ENCODE measurements at regions of chr12 and their contacts with region 1.

Region 1: DNA sequence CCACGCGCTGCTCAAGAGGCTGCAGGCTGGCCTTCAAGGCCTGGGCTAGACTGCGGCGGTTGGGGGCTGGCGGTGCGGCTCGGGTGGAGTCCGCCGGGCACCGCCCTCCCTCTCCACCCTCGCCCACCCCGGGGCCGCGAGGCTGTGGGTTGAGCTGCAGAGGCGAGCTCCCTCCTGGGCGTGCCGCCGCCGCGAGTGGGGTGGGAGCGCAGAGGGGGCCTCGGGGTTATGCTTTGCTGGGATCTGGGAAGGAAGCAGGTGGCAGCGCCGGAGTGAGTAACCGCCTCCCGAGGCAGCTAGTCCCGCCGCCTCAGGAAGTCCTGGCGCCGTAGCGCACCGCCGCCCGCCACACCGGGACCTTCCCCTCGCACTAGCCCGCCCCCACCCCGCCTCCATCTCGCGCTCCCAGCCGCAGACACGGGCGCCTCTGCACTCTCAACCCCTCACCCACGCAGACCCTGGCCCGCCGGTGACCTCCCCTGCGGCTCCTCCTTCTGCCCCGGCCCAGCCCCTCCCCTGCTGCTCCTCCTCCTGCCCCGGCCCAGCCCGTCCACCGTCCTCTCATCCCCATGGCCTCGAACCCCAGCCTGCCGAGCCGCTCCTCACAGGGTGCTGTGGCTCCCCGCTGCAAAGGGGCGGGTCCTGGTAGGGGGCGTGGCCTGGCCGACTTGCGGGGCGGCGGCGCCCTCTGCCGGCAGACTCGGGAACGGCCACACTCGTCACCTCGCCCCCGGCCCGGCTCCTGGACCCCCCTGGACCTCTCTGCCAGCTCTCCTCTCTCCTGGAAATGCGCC is 16.6 kb downstream of the TAMALIN start:
- DNase-seq: peak; percentile 95

Region 2: GRCh38 chr12:52004042-52004648 is 19.2 kb before region 1 on chr12:
- intact Hi-C with region 1: loop called (anchors 1 kb)
- DNase-seq: no peak

Region 3: GRCh38 chr12:52041695-52042123 is 18.3 kb after region 1 on chr12:
- intact Hi-C with region 1: loop called (anchors 2 kb)
- DNase-seq: peak; percentile 87

Region 4: GRCh38 chr12:52050761-52051541 is 27.6 kb after region 1 on chr12 and contains the start of gene NR4A1:
- intact Hi-C with region 1: loop called (anchors 1 kb)
- DNase-seq: peak; percentile 98
- total RNA-seq, gene NR4A1: 76.3 TPM

Region 5: GRCh38 chr12:52082988-52083637 is 59.7 kb after region 1 on chr12:
- intact Hi-C with region 1: loop called (anchors 1 kb)
- DNase-seq: no peak